Transverse colon (tissue), 4 donors: ENCODE measurements at regions of chr2 and their contacts with region 1.

Region 1: DNA sequence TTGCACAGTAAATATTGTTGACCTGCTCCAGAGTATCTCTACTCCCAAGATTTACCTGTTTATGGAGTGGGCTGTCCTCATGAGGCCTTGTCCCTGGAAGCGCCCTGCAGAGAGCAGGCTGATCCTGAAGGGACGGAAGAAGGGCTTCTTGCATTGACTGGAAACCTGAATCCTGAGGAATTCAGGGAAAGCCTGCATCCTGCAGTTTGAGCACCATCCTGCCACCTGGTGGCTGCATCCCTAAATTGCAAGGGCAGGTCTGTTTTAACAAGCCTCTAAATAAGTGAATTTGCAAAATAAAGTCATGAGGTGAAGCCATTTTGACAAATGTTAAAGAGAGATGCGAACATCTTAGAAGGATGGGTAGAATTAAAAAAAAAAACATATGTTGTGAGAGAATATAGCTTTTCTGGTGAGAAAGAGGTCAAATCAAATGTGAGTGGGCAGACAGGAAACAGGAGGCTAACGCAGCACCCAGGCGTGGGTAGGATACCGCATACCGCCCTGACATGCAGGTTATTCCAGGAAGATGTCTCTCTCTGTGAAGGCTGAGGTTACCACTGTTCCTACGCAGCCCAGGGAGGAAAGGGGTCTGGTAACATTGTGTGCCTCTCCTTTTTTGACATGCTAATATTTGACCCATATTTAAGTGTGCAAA is 754.9 kb downstream of the RNF144A start:
- DNase-seq: peak; percentile 72
- H3K4me3 ChIP-seq: no peak overlapping the region
- H3K27ac ChIP-seq: peak overlapping the region in 1 of 4 donors; percentile 17
- H3K4me1 ChIP-seq: peaks cover 0 to 3% (median 0%) of the 10 kb centered on the region in 4 donors
- H3K27me3 ChIP-seq: no peaks in the 10 kb centered on the region
- CTCF ChIP-seq: peak; percentile 58 to 72 (median 69)
- EP300 ChIP-seq: no peak
- POLR2A ChIP-seq: no peak

Region 2: DNA sequence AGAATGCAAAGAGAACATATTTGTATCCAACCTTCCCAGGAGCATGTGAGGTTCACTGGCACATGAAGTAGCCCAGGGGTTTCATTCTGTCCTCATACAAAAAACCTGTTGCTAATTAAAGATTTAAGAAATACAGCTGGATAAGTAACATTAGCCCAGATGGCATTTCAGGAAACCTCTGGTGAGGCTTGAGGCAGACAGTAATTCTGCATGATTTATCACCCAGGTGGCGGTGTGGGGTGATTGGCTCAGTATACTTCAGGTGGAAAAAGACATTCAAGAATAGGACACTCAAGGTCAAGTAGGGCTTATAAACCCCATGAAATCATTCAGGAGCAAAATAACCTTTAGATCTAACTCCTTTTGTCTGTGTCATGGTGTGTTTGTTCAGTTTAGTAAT is 517.5 kb before region 1 on chr2:
- in situ Hi-C with region 1: no loop called
- intact Hi-C with region 1: no loop called
- DNase-seq: no peak
- H3K4me3 ChIP-seq: no peak overlapping the region
- H3K27ac ChIP-seq: no peak overlapping the region
- H3K4me1 ChIP-seq: no peaks in the 10 kb centered on the region
- H3K27me3 ChIP-seq: no peaks in the 10 kb centered on the region
- CTCF ChIP-seq: no peak
- EP300 ChIP-seq: no peak
- POLR2A ChIP-seq: no peak

Region 3: DNA sequence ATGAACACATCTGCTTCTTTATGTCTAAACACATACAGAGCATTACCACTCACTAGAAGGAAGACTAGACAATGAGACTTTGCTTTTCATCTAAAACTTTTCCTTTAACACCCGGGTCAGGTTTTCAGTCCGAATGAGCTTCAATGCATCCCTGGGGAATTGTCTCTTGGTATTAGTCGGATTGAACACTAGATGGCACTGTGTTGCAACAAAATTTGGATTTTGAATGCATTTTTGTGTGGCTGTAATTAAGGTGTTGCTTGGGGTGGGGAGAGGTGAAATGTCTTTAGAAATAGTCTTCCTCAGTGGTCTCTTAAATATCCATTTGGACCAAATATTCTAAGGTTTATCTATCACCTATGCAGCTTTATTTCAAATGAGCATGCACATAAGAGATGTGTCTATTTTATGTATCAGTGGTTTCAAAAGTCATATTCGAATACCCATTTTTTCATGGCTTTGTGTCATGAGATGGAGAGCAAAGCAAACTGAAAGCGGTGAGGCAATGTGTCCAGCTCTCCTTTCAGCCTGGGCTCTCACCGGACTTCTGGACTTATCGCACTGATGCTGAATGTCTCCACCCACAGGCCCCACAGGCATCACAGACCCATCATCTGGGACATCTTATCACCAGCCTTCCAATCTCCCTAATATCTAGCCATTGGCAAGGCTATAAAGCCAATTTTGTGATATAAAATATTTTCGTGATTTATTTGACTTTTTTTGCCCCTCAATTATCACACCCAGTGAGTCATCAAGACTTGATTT is 244.7 kb before region 1 on chr2:
- in situ Hi-C with region 1: loop called in 1 of 4 experiments (anchors 10 kb)
- intact Hi-C with region 1: no loop called
- DNase-seq: no peak
- H3K4me3 ChIP-seq: no peak overlapping the region
- H3K27ac ChIP-seq: no peak overlapping the region
- H3K4me1 ChIP-seq: peaks cover 0 to 12% (median 0%) of the 10 kb centered on the region in 4 donors
- H3K27me3 ChIP-seq: peaks cover 27% of the 10 kb centered on the region
- CTCF ChIP-seq: peak; percentile 63 to 82 (median 72)
- EP300 ChIP-seq: no peak
- POLR2A ChIP-seq: no peak

Region 4: DNA sequence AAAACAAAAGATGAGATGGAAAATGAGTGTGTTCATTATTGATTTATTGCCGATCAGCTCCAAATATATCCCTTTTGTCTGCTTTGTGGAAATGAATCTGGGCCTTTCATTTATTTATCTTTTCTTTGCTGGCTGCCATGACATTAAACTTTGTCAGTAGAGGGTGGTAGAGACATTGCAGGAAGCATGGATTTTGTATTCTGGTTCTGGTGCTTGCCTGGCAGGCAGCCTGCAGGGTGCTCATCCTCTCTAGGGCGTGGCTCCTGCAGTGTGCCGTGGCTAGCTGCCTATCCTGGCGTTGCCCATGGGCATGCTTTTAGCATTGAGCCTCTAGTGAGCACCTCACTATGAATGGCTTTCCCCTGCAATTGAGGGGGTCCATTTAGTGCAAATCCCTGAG is 161.8 kb before region 1 on chr2:
- in situ Hi-C with region 1: no loop called
- intact Hi-C with region 1: no loop called
- DNase-seq: no peak
- H3K4me3 ChIP-seq: no peak overlapping the region
- H3K27ac ChIP-seq: no peak overlapping the region
- H3K4me1 ChIP-seq: no peaks in the 10 kb centered on the region
- H3K27me3 ChIP-seq: no peaks in the 10 kb centered on the region
- CTCF ChIP-seq: no peak
- EP300 ChIP-seq: no peak
- POLR2A ChIP-seq: no peak